ENCODE measurements at regions of chr9 and their contacts with region 1.

Region 1: DNA sequence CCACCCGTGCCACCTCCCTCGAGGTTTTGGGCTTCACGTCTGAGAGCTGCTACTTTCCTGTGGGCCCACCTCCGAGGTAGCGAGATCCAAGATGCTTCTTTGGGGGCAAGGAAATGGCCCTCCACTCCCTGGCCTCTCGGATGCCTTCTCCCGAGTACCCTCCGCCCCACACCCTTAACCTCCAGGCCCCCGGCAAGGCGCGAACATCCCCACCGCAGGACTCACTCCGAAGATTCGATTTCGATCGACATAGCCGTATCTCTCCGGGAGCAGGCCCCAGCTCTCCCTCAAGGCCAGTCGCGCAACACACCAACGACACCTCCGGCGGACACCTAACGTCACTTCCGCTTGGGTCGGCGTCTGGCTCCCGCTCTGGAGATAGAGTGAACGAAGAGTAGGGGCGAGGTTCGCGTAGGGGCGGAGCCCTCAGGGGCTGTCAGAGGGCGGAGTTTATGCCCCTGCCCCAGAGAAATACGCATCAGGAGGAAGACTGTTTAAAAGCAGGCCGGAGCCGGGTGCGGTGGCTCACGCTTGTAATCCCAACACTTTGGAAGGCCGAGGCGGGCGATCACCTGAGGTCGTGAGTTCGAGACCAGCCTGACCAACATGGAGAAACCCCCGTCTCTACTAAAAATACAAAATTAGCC is at the start of gene SMU1:
- DNase-seq: peak; percentile 98 to 99 (median 99)
- H3K4me3 ChIP-seq: peak within 1 kb of the TSS; percentile 72 to 99 (median 93)
- H3K27ac ChIP-seq: peak within 1 kb of the TSS; percentile 96 to 99
- H3K4me1 ChIP-seq: peaks cover 18 to 28% (median 24%) of the 10 kb centered on the region in 4 experiments
- H3K27me3 ChIP-seq: no peaks in the 10 kb centered on the region

Region 2: GRCh38 chr9:32940740-32941139 is 135.7 kb before region 1 on chr9:
- CTCF ChIA-PET with region 1: no interaction called
- POLR2A ChIA-PET with region 1: no interaction called
- DNase-seq: no peak
- H3K4me3 ChIP-seq: no peak overlapping the region
- H3K27ac ChIP-seq: no peak overlapping the region
- H3K4me1 ChIP-seq: no peaks in the 10 kb centered on the region
- H3K27me3 ChIP-seq: peaks cover 0 to 64% (median 18%) of the 10 kb centered on the region in 5 experiments

Region 3: GRCh38 chr9:33007755-33008154 is 68.7 kb before region 1 on chr9:
- CTCF ChIA-PET with region 1: no interaction called
- POLR2A ChIA-PET with region 1: no interaction called
- DNase-seq: no peak
- H3K4me3 ChIP-seq: no peak overlapping the region
- H3K27ac ChIP-seq: no peak overlapping the region
- H3K4me1 ChIP-seq: peaks cover 0 to under 1% (median 0%) of the 10 kb centered on the region in 4 experiments
- H3K27me3 ChIP-seq: no peaks in the 10 kb centered on the region

Region 4: DNA sequence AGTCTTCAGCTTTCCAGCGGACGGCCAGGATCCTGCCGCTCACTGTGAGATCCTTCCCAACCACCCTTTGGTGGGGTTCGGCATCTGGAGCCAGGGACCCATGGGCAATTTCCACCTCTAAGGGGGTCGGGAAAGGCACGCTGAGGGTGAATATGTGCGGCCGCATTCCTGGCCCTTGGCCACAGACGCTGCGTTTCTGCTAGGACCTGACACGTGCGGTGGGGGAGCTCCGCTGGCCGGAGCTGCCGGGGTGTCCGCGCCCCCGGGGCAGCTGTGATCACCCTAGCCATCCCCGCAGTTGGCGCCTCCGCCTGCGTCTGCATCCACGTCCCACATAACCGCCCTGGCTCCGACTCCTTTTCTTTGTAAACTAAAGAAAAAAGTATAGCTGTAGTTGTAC is 56.7 kb before region 1 on chr9:
- CTCF ChIA-PET with region 1: no interaction called
- POLR2A ChIA-PET with region 1: no interaction called
- DNase-seq: no peak
- H3K4me3 ChIP-seq: no peak overlapping the region
- H3K27ac ChIP-seq: no peak overlapping the region
- H3K4me1 ChIP-seq: peaks cover 11 to 26% (median 14%) of the 10 kb centered on the region in 4 experiments
- H3K27me3 ChIP-seq: no peaks in the 10 kb centered on the region

Region 5: DNA sequence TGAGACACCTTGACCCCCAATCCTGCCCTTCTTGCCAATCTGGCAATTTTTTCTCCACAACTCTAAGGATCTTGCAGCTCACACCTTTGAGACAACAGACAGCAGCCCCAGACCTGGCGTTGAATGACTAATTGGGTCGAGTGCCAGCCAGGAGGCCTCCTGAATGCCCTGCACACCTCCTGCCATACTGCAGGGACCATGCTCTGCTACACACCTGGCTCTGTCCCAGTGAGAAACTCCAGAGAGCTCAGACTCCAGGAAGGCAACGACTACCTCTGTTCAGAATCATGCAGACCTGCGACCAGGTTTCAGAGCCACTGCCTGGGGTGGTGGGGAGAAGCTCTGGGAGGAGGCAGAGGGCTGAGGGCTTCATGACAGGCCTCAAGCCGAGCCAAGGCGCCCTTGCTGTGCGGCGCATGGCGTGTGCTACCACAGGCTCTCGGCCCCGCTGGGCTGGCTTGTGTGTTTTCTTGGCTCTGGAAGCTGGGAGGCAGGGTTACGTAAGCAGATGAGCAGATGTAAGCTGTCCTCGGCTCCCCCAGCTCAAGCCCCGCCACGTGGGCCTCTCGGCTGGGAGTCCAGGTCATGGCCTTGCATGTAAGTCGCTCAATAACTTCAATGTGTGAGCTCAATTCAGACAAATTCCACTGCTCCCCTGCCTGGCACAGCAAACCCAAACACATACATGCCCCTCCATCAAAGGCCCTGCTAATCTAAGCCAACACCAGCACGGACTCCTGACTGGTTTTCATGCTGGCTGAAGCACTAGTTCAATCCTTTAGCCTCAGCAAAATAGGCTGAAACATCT is 63.1 kb after region 1 on chr9:
- CTCF ChIA-PET with region 1: no interaction called
- POLR2A ChIA-PET with region 1: no interaction called
- DNase-seq: no peak
- H3K4me3 ChIP-seq: no peak overlapping the region
- H3K27ac ChIP-seq: no peak overlapping the region
- H3K4me1 ChIP-seq: peaks cover 11 to 69% (median 27%) of the 10 kb centered on the region in 4 experiments
- H3K27me3 ChIP-seq: no peaks in the 10 kb centered on the region

Region 6: DNA sequence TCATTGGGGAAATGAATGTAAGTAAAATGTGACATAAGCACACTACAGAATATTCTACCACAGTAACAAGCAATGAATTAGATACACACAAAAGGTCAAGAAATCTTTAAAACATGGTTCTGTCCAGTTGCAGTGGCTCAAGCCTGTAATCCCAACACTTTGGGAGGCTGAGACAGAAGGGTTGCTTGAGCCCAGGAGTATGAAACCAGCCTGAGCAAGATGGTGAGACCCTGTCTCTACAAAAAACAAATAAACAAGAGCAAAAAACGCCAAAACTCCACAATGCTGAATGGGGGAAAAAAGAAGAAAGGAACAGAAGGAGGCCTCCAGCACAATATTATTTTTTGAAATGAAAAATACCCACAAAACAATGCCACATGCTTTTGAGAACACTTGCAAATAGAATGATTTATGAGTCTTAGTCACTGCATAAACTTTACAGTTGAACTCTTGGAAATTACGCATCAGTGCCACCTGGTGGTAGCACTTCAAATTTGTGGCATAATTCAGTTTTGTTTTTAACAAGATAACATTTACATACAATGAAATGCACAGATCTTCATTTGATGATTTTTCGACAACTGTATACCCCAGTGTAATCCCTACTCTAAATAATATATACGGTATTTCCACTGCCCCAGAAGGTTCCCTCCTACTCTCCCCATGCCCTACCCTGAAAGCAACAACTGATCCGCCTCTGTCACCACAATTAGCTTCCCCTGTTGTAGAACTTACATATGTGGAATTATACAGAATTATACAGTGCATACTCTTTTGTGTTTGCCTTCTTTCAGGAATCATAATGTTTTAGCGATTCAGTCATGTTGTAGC is 149.1 kb after region 1 on chr9:
- CTCF ChIA-PET with region 1: interaction called, 29 read pairs
- POLR2A ChIA-PET with region 1: no interaction called
- DNase-seq: peak; percentile 87 to 95 (median 93)
- H3K4me3 ChIP-seq: peak overlapping the region in 1 of 7 experiments; percentile 33
- H3K27ac ChIP-seq: peak overlapping the region in 1 of 2 experiments; percentile 12
- H3K4me1 ChIP-seq: peaks cover 9 to 42% (median 31%) of the 10 kb centered on the region in 4 experiments
- H3K27me3 ChIP-seq: no peaks in the 10 kb centered on the region

Measured in common myeloid progenitor, CD34-positive (primary cell).